Ascending aorta (tissue), 2 donors: ENCODE measurements at regions of chr3 and their contacts with region 1.

Region 1: GRCh38 chr3:10224784-10225665 is 23.2 kb upstream of the TATDN2 start:
- DNase-seq: peak in 1 of 2 donors; percentile 91
- H3K4me3 ChIP-seq: no peak overlapping the region
- H3K27ac ChIP-seq: peak overlapping the region; percentile 23 to 38
- H3K4me1 ChIP-seq: no peaks in the 10 kb centered on the region
- H3K27me3 ChIP-seq: no peaks in the 10 kb centered on the region
- CTCF ChIP-seq: peak; percentile 83 to 89 (median 88)

Region 2: DNA sequence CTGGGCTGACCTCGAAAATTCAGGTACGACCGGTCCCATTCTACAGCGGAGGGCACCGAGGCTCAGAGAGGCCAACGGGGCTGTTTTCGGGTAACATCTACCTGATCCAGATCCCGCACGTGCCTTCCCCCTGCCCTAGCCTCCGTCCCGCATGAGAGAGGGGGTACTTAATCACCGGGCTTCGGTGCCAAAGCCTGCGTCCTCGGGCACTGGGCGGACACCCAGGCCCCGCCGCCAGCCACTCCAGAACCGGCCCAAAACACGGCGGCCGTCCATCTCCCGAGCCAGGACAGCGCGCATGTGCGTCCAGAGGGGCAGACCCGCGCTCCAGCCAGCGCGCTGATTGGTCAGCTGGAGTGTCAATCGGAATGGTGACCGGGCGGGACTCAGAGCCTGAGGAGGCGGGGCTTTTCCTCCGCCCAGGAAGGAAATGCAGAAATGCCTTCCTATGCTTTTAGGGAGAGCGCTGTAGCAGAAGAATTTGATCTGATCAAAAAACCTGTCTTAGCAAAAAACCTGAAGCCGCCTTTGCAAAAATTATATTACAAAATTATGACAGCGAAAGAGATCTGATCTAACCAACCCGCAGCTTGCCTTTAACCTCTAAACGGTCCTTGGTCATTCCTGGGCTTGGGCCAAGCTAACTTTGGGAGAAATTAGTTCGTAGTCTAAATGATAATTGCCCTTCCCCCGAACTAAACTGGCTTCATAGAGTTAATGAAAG is 381.1 kb before region 1 on chr3 and contains the start of gene RPUSD3:
- intact Hi-C with region 1: loop called (anchors 10 kb)
- DNase-seq: peak; percentile 89 to 99
- H3K4me3 ChIP-seq: peak within 1 kb of the TSS; percentile 76 to 77
- H3K27ac ChIP-seq: peak within 1 kb of the TSS; percentile 80 to 84
- H3K4me1 ChIP-seq: peaks cover 4 to 9% of the 10 kb centered on the region in 2 donors
- H3K27me3 ChIP-seq: no peaks in the 10 kb centered on the region
- CTCF ChIP-seq: no peak
- total RNA-seq, gene RPUSD3: 30.7 TPM

Region 3: DNA sequence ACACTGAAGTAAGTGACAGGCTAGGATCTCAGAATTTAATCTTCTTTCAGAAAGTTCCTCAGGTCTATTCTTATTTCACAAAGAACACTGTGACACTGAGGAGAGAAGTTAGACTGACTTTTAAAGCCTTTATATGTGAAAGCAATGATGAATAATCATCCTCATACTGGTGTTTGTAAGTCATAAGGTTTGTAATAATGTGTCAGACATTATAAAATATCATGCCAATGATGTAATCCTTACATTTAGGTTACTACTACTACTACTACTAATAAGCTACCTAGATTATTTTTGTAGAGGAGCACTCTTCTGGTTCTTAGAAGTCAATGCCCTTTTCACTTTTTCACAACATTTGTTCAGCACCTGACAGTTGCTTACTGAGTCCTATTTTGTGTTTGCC is 150.4 kb before region 1 on chr3:
- intact Hi-C with region 1: no loop called
- DNase-seq: no peak
- H3K4me3 ChIP-seq: no peak overlapping the region
- H3K27ac ChIP-seq: no peak overlapping the region
- H3K4me1 ChIP-seq: no peaks in the 10 kb centered on the region
- H3K27me3 ChIP-seq: no peaks in the 10 kb centered on the region
- CTCF ChIP-seq: no peak

Region 4: GRCh38 chr3:10099041-10099440 is 126.0 kb before region 1 on chr3:
- intact Hi-C with region 1: no loop called
- DNase-seq: no peak
- H3K4me3 ChIP-seq: no peak overlapping the region
- H3K27ac ChIP-seq: no peak overlapping the region
- H3K4me1 ChIP-seq: no peaks in the 10 kb centered on the region
- H3K27me3 ChIP-seq: no peaks in the 10 kb centered on the region
- CTCF ChIP-seq: no peak

Region 5: GRCh38 chr3:10115326-10116137 is 109.5 kb before region 1 on chr3 and contains the start of gene BRK1:
- intact Hi-C with region 1: loop called (anchors 1 kb)
- DNase-seq: peak; percentile 87 to 98
- H3K4me3 ChIP-seq: peak within 1 kb of the TSS; percentile 75 to 76
- H3K27ac ChIP-seq: peak within 1 kb of the TSS; percentile 55 to 74
- H3K4me1 ChIP-seq: peaks cover 6 to 11% of the 10 kb centered on the region in 2 donors
- H3K27me3 ChIP-seq: no peaks in the 10 kb centered on the region
- CTCF ChIP-seq: no peak
- total RNA-seq, gene BRK1: 87.3 TPM

Region 6: GRCh38 chr3:10164546-10165393 is 60.3 kb before region 1 on chr3 and contains the start of gene IRAK2:
- intact Hi-C with region 1: loop called (anchors 1 kb)
- DNase-seq: peak in 1 of 2 donors; percentile 88
- H3K4me3 ChIP-seq: peak within 1 kb of the TSS; percentile 86 to 91
- H3K27ac ChIP-seq: peak within 1 kb of the TSS; percentile 90 to 93
- H3K4me1 ChIP-seq: peaks cover 2 to 3% of the 10 kb centered on the region in 2 donors
- H3K27me3 ChIP-seq: no peaks in the 10 kb centered on the region
- CTCF ChIP-seq: peak; percentile 93 to 98 (median 95)
- total RNA-seq, gene IRAK2: 1.3 TPM